ENCODE measurements at regions of chrX and their contacts with region 1.

Region 1: GRCh38 chrX:19904778-19905367 is 17.5 kb upstream of the SH3KBP1 start:
- DNase-seq: peak in 3 of 35 experiments; percentile 3 to 65 (median 11)
- ATAC-seq: peak; percentile 64 to 78 (median 68)
- H3K4me3 ChIP-seq: no peak overlapping the region
- H3K4me3 Mint-ChIP-seq: no peak overlapping the region
- H3K27ac ChIP-seq: no peak overlapping the region
- H3K27ac Mint-ChIP-seq: no peak overlapping the region
- H3K4me1 ChIP-seq: no peaks in the 10 kb centered on the region
- H3K4me1 Mint-ChIP-seq: peaks cover 0 to 10% (median 4%) of the 10 kb centered on the region in 3 donors
- H3K27me3 ChIP-seq: no peaks in the 10 kb centered on the region
- H3K27me3 Mint-ChIP-seq: peaks cover 0 to 3% of the 10 kb centered on the region in 2 donors

Region 2: DNA sequence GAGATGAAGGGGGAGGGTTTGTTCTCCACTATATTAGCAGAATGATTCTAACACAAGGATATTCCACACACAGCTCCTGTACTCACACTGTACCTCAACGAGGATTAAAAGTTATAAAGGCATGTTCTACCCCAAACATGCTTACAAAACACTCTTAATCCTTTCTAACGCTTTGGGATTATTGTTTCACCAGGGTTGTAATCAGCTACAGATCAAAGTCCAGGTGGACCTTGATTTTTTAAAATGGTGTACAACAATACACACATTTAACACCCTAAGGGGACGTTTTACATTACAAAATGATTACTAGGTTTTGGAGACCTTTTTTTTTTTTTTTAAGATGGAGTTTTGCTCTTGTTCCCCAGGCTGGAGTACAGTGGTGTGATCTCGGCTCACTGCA is 339.3 kb before region 1 on chrX:
- CTCF ChIA-PET with region 1: interaction called in 1 of 2 experiments, 13 read pairs
- POLR2A ChIA-PET with region 1: no interaction called
- DNase-seq: no peak
- ATAC-seq: no peak
- H3K4me3 ChIP-seq: no peak overlapping the region
- H3K4me3 Mint-ChIP-seq: no peak overlapping the region
- H3K27ac ChIP-seq: no peak overlapping the region
- H3K27ac Mint-ChIP-seq: peak overlapping the region in 1 of 2 donors; percentile 30
- H3K4me1 ChIP-seq: peaks cover 0 to 10% of the 10 kb centered on the region in 2 experiments
- H3K4me1 Mint-ChIP-seq: peaks cover 6 to 43% (median 23%) of the 10 kb centered on the region in 3 donors
- H3K27me3 ChIP-seq: no peaks in the 10 kb centered on the region
- H3K27me3 Mint-ChIP-seq: no peaks in the 10 kb centered on the region

Region 3: DNA sequence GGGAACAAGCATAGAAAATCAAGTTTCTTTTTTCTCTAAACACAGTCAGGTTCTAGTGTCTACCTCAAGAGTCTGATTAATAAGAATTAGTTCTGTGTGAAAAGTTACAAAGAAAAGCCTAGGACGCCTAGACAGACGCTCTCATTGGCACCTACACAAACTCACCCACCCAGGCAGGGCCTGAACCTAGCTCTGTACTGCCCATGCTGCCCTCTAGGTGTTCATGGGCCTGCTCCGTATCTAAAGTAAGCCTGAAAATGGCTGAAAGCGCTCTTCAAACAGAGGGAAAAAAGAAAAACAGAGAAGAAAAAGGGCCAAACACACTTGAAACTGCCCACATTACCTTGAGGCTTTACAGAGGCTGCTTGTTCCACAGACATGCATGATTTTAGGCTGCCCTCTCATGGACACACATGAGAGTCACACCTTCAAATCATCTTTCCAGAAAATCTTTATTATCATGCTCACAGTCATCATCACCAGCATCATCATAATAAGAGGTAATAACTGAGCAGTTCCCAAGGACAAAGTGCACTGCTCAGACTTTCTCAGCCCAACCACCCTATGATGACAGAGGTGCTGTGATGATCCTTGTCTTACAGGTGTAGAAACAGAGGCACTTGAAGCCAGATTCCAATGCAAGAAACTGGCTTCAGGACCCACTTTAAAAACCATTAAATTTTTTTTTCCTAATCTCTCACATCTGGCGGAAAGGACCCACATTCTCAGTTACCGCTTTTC is 162.3 kb after region 1 on chrX:
- CTCF ChIA-PET with region 1: interaction called, 5 to 11 read pairs
- POLR2A ChIA-PET with region 1: no interaction called
- DNase-seq: peak in 12 of 35 experiments; percentile 0 to 59 (median 4)
- ATAC-seq: peak in 2 of 4 experiments; percentile 55 to 59
- H3K4me3 ChIP-seq: no peak overlapping the region
- H3K4me3 Mint-ChIP-seq: no peak overlapping the region
- H3K27ac ChIP-seq: no peak overlapping the region
- H3K27ac Mint-ChIP-seq: no peak overlapping the region
- H3K4me1 ChIP-seq: no peaks in the 10 kb centered on the region
- H3K4me1 Mint-ChIP-seq: no peaks in the 10 kb centered on the region
- H3K27me3 ChIP-seq: no peaks in the 10 kb centered on the region
- H3K27me3 Mint-ChIP-seq: no peaks in the 10 kb centered on the region